IMR-90 (cell line): ENCODE measurements at regions of chr9 and their contacts with region 1.

Region 1: GRCh38 chr9:131478421-131478868 is 24.3 kb upstream of the POMT1 start:
- DNase-seq: no peak
- ATAC-seq: peak; percentile 28; the same call in 1 of the 2 replicates
- H3K4me3 ChIP-seq: no peak overlapping the region
- H3K27ac ChIP-seq: no peak overlapping the region
- H3K4me1 ChIP-seq: no peaks in the 10 kb centered on the region
- H3K27me3 ChIP-seq: no peaks in the 10 kb centered on the region
- CTCF ChIP-seq: peak; percentile 40
- POLR2A ChIP-seq: no peak
- RAD21 ChIP-seq: 0 out of 2 replicates have a peak, but pooled peaks have one; percentile 25

Region 2: DNA sequence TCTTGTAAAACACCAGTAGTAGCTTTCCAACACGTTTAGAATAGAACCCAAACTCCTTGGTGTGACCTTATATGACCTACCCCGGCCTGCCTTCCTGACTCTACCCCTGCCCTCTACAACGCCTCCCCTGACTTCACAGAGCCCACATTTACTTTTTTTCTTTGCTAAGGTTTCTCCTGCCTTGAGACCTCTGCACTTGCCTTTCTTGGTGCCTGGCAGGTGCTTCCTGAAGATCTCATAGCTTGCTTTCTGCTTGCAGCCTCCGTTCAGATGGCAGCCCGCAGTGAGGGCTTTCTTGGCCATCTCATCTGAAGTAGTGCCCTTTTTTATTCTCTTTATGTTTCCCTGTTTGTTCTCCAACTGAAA is 328.8 kb before region 1 on chr9:
- CTCF ChIA-PET with region 1: no interaction called
- POLR2A ChIA-PET with region 1: no interaction called
- dilution Hi-C with region 1: no loop called
- in situ Hi-C with region 1: no loop called
- intact Hi-C with region 1: loop called (anchors 10 kb)
- DNase-seq: no peak
- ATAC-seq: no peak
- H3K4me3 ChIP-seq: no peak overlapping the region
- H3K27ac ChIP-seq: no peak overlapping the region
- H3K4me1 ChIP-seq: no peaks in the 10 kb centered on the region
- H3K27me3 ChIP-seq: no peaks in the 10 kb centered on the region
- CTCF ChIP-seq: no peak
- POLR2A ChIP-seq: no peak
- RAD21 ChIP-seq: no peak

Region 3: GRCh38 chr9:131349881-131350563 is 128.4 kb before region 1 on chr9:
- CTCF ChIA-PET with region 1: interaction called, 3 read pairs
- POLR2A ChIA-PET with region 1: no interaction called
- dilution Hi-C with region 1: no loop called
- in situ Hi-C with region 1: no loop called
- intact Hi-C with region 1: loop called (anchors 1 kb)
- DNase-seq: peak; percentile 77
- ATAC-seq: peak; percentile 99
- H3K4me3 ChIP-seq: peak overlapping the region; percentile 23; the same call in 1 of the 2 replicates
- H3K27ac ChIP-seq: no peak overlapping the region
- H3K4me1 ChIP-seq: no peaks in the 10 kb centered on the region
- H3K27me3 ChIP-seq: no peaks in the 10 kb centered on the region; the same call in 1 of the 2 replicates
- CTCF ChIP-seq: peak; percentile 84
- POLR2A ChIP-seq: no peak
- RAD21 ChIP-seq: peak; percentile 90

Region 4: GRCh38 chr9:131393622-131394463 is 84.6 kb before region 1 on chr9 and contains the start of gene PRRC2B:
- CTCF ChIA-PET with region 1: no interaction called
- POLR2A ChIA-PET with region 1: no interaction called
- dilution Hi-C with region 1: no loop called
- in situ Hi-C with region 1: no loop called
- intact Hi-C with region 1: loop called (anchors 5 kb)
- DNase-seq: peak; percentile 62
- ATAC-seq: peak; percentile 85
- H3K4me3 ChIP-seq: peak within 1 kb of the TSS; percentile 83
- H3K27ac ChIP-seq: peak within 1 kb of the TSS; percentile 60
- H3K4me1 ChIP-seq: peaks cover 17% of the 10 kb centered on the region
- H3K27me3 ChIP-seq: no peaks in the 10 kb centered on the region
- CTCF ChIP-seq: peak; percentile 57
- POLR2A ChIP-seq: peak; percentile 81
- RAD21 ChIP-seq: peak; percentile 27
- total RNA-seq, gene PRRC2B: 19.4 and 22.2 TPM in 2 replicates

Region 5: DNA sequence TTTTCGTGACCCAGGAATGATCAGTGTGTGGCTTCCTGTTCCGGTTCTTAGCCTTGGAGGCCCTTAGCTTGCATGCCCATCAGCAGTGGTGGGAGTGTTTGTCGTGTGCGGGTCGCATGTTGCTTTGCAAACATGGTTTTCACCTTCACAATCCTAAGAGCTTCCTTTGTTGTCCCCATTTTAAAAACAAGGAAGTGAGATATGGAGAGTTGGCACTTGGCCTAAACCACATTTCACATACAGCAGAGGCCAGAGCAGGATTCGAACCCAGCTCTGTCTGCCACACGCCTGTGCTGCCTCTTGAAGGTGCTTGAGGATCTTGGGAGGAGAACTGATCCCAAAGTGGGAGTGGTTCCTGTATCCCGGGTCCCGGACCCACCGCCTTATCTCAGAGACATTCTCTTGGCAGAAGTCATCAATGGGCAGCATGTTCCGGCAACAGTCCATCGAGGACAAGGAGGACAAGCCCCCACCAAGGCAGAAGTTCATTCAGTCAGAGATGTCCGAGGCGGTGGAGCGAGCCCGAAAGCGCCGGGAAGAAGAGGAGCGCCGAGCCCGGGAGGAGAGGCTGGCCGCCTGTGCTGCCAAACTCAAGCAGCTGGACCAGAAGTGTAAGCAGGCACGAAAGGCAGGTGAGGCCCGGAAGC is 14.0 kb before region 1 on chr9:
- CTCF ChIA-PET with region 1: no interaction called
- POLR2A ChIA-PET with region 1: no interaction called
- dilution Hi-C with region 1: no loop called
- in situ Hi-C with region 1: no loop called
- intact Hi-C with region 1: no loop called
- DNase-seq: no peak
- ATAC-seq: no peak
- H3K4me3 ChIP-seq: no peak overlapping the region
- H3K27ac ChIP-seq: no peak overlapping the region
- H3K4me1 ChIP-seq: no peaks in the 10 kb centered on the region
- H3K27me3 ChIP-seq: no peaks in the 10 kb centered on the region
- CTCF ChIP-seq: no peak
- POLR2A ChIP-seq: no peak
- RAD21 ChIP-seq: no peak

Region 6: DNA sequence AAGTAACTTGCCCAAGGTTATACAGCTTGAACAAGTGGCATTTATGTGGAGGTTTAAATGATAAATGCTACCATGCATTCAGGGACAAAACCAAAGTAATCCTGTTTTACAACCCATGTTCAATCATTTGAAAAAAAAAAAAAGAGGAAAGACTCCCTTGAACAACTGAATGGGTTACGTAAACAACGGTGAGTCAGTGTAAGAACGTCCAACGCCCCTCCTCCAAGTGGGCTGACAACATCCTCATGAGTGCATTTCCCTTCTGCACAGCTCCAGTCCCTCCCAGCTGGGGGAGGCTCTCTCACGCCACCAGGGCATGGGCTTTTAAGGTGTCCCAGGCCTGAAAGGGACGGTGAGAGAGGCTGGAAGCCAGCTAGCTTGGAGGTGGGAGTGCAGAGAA is 156.8 kb after region 1 on chr9:
- CTCF ChIA-PET with region 1: no interaction called
- POLR2A ChIA-PET with region 1: no interaction called
- dilution Hi-C with region 1: no loop called
- in situ Hi-C with region 1: no loop called
- intact Hi-C with region 1: no loop called
- DNase-seq: peak; percentile 99
- ATAC-seq: peak; percentile 100
- H3K4me3 ChIP-seq: no peak overlapping the region
- H3K27ac ChIP-seq: peak overlapping the region; percentile 22
- H3K4me1 ChIP-seq: peaks cover 9% of the 10 kb centered on the region
- H3K27me3 ChIP-seq: no peaks in the 10 kb centered on the region
- CTCF ChIP-seq: 0 out of 2 replicates have a peak, but pooled peaks have one; percentile 10
- POLR2A ChIP-seq: 0 out of 2 replicates have a peak, but pooled peaks have one; percentile 38
- RAD21 ChIP-seq: peak; percentile 44